ENCODE measurements at regions of chr11 and their contacts with region 1.

Region 1: GRCh38 chr11:57567515-57568329 is at the start of gene UBE2L6:
- DNase-seq: peak in 1 of 2 experiments; percentile 80
- H3K4me3 ChIP-seq: peak within 1 kb of the TSS; percentile 41 to 89 (median 83)
- H3K27ac ChIP-seq: peak within 1 kb of the TSS; percentile 78; the same call in 1 of the 2 replicates
- H3K4me1 ChIP-seq: peaks cover 0 to 11% (median 4%) of the 10 kb centered on the region in 4 experiments; a peak in 6 of 7 replicates
- H3K27me3 ChIP-seq: no peaks in the 10 kb centered on the region
- CTCF ChIP-seq: peak in 2 of 3 experiments; percentile 48 to 50; a peak in 3 of 4 replicates
- EP300 ChIP-seq: no peak
- POLR2A ChIP-seq: peak; percentile 65 to 81
- RAD21 ChIP-seq: peak in 1 of 2 experiments; percentile 26; a peak in 2 of 4 replicates
- total RNA-seq, gene UBE2L6: 67.8 and 68.1 TPM in 2 replicates

Region 2: DNA sequence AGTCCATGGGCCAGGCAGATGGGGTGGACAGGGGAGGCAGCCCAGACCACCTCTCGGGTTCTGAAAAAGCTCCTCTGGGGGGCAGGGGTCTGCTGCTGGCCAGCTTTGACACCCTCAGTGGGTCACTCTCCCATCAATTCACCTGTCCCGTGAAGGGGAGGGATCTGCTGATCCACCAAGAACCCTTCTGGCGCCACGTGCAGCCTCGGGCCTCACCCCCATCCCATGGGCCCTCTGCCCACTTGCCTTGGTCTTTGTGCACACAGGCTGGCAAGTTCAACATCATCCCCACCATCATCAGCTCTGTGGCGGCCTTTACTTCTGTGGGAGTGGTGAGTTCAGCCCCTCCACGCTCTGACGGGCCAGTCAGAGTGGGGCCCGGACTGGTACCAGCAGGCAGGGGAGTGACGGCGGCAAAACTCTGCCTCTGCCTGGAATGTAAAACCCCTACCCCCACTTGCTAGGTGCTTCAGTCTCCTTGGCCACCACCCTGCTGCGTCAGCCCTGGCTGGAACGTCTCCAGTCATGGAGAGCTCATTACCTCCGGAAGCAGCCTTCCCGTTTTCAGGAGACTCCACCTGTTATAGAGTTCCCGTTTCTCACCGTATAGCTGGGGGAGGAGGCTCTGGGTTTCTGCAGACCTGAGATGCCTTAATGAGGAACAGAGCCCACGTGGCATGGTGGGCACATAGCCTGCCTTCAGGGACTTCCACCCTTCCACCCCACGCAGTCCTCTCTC is 199.4 kb before region 1 on chr11:
- CTCF ChIA-PET with region 1: no interaction called
- POLR2A ChIA-PET with region 1: no interaction called
- DNase-seq: no peak
- H3K4me3 ChIP-seq: no peak overlapping the region
- H3K27ac ChIP-seq: no peak overlapping the region
- H3K4me1 ChIP-seq: peaks cover 8 to 17% (median 11%) of the 10 kb centered on the region in 4 experiments
- H3K27me3 ChIP-seq: no peaks in the 10 kb centered on the region; a peak in 2 of 7 replicates
- CTCF ChIP-seq: no peak
- EP300 ChIP-seq: no peak
- POLR2A ChIP-seq: no peak
- RAD21 ChIP-seq: no peak

Region 3: GRCh38 chr11:57556061-57556460 is 11.7 kb before region 1 on chr11:
- CTCF ChIA-PET with region 1: interaction called, 18 read pairs
- POLR2A ChIA-PET with region 1: interaction called, 7 read pairs
- DNase-seq: no peak
- H3K4me3 ChIP-seq: no peak overlapping the region
- H3K27ac ChIP-seq: no peak overlapping the region
- H3K4me1 ChIP-seq: peaks cover 0 to 3% (median 2%) of the 10 kb centered on the region in 4 experiments; a peak in 2 of 7 replicates
- H3K27me3 ChIP-seq: no peaks in the 10 kb centered on the region
- CTCF ChIP-seq: no peak
- EP300 ChIP-seq: no peak
- POLR2A ChIP-seq: no peak
- RAD21 ChIP-seq: no peak

Region 4: DNA sequence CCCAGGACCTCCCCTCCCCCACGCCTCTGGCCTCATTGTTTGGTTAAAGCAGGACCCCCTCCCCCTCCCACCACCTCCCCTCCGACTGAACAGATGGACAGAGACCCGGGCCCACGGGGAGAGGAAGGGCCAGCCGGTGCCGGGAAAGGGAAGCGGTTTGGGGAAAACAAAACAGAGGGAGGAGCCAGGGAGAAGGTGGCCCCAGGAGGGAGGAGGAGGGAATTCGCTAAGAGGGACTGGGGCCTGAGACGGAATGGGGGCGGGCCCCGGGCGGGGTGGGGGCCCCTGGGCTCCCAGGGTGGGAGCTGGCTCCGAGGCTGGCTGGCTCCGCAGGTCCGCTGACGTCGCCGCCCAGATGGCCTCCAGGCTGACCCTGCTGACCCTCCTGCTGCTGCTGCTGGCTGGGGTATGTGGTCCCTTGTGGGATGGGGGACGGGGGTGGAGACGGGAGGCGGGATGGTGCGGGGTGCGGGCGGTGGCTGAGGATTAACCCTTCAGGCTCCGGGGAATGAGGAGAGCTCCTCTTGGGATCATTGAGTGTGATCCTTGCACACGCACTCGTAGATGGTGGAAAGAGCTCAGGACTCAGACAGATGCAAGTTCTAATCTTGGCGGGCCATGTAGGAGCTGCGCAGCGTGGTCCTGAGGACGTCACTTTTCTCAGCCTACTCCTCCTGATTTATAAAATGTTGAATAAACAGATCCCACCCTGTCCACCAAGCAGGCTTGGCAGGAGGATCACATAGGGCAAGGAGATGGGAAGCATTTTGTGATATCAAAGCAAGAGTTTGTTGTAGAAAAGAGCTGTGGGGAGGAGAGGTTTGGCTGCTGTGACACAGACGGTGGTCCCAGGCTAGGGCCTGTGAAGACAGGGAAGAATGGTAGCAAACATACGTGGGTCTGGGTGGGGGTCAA is 30.5 kb after region 1 on chr11:
- CTCF ChIA-PET with region 1: interaction called, 39 read pairs
- POLR2A ChIA-PET with region 1: interaction called, 66 read pairs
- DNase-seq: peak; percentile 75 to 87
- H3K4me3 ChIP-seq: peak overlapping the region; percentile 41 to 64 (median 54)
- H3K27ac ChIP-seq: peak overlapping the region; percentile 68; the same call in 1 of the 2 replicates
- H3K4me1 ChIP-seq: peaks cover 7 to 17% (median 11%) of the 10 kb centered on the region in 4 experiments
- H3K27me3 ChIP-seq: no peaks in the 10 kb centered on the region
- CTCF ChIP-seq: no peak
- EP300 ChIP-seq: peak in 1 of 2 experiments; percentile 86; a peak in 1 of 3 replicates
- POLR2A ChIP-seq: no peak; a peak in 1 of 3 replicates
- RAD21 ChIP-seq: peak in 1 of 2 experiments; percentile 12; a peak in 1 of 4 replicates

Region 5: GRCh38 chr11:57604296-57605027 is 36.7 kb after region 1 on chr11:
- CTCF ChIA-PET with region 1: interaction called, 39 read pairs
- POLR2A ChIA-PET with region 1: interaction called, 66 read pairs
- DNase-seq: no peak
- H3K4me3 ChIP-seq: no peak overlapping the region
- H3K27ac ChIP-seq: no peak overlapping the region
- H3K4me1 ChIP-seq: no peaks in the 10 kb centered on the region
- H3K27me3 ChIP-seq: no peaks in the 10 kb centered on the region
- CTCF ChIP-seq: no peak
- EP300 ChIP-seq: no peak
- POLR2A ChIP-seq: no peak
- RAD21 ChIP-seq: no peak

Region 6: DNA sequence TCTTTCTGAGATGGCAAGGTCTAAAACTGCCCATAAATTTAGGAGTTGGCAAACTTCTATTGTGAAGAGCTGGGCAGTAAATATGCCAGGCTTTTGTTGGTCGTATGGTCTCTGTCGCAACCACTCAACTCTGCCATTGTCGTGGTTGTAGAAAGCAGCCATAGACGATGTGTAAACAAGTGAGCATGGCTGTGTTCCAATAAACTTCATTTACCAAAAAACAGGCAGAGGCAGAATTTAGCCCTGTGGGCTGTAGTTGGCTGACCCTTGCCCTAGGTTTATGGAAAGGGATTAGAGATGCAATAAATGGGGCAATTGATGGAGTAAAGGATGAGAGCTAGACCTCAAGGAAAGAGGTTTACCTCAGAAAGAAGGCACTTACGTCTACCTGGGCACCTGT is 64.4 kb after region 1 on chr11:
- CTCF ChIA-PET with region 1: interaction called, 357 read pairs
- POLR2A ChIA-PET with region 1: interaction called, 591 read pairs
- DNase-seq: no peak
- H3K4me3 ChIP-seq: no peak overlapping the region
- H3K27ac ChIP-seq: no peak overlapping the region
- H3K4me1 ChIP-seq: peaks cover under 1 to 4% (median under 1%) of the 10 kb centered on the region in 4 experiments
- H3K27me3 ChIP-seq: no peaks in the 10 kb centered on the region; a peak in 1 of 7 replicates
- CTCF ChIP-seq: no peak
- EP300 ChIP-seq: no peak
- POLR2A ChIP-seq: no peak
- RAD21 ChIP-seq: no peak

Region 7: DNA sequence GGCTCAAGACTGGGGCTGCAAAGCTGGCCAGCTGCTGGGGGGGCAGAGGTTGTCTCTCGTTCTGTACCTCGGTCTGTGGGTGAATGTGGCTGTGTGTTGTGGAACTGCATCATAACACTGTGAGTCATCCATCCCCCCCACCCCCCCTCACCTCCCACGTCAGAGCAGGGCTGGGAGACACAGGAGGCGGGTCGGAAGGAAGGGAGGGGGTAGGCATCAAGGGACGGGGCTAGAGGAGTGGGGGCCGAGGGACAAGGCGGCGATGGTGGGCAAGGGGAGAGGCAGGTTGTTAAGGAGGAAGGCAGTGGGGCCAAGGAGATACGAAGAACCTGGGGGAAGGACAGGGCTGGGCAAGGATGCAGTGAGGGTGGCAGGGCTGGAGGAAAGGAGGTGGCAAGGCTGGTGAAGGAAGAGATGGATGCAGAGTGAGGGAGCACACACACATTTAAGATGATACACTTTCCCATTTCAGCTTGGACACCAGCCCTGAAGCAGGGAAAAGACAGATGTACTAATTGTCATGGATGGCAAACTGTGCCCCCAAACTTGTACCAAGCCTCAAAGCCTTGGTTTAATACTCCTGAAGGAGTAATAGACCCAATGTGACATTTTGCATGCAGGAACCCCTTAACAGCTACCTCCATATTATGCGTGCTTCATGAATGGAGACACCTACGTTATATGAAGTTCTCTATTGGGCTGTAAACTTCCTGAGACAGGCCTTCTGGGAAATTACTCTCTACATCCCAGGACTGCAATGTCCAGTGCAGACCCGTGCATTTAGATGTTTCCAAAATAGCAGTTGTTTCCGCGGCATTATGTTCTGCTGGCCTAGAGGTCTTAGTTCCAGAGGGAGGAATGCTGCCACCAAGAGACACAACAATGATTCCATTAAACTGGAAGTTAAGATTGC is 82.4 kb after region 1 on chr11 and contains the start of gene YPEL4:
- CTCF ChIA-PET with region 1: interaction called, 357 read pairs
- POLR2A ChIA-PET with region 1: interaction called, 591 read pairs
- DNase-seq: peak in 1 of 2 experiments; percentile 60
- H3K4me3 ChIP-seq: peak within 1 kb of the TSS; percentile 27 to 65 (median 50); a peak in 7 of 8 replicates
- H3K27ac ChIP-seq: no peak within 1 kb of the TSS
- H3K4me1 ChIP-seq: peaks cover 26 to 47% (median 34%) of the 10 kb centered on the region in 4 experiments
- H3K27me3 ChIP-seq: peaks cover 0 to 4% (median 1%) of the 10 kb centered on the region in 4 experiments; a peak in 5 of 7 replicates
- CTCF ChIP-seq: no peak
- EP300 ChIP-seq: no peak
- POLR2A ChIP-seq: peak; percentile 36 to 75
- RAD21 ChIP-seq: no peak
- total RNA-seq, gene YPEL4: 0.13 TPM in 1 of 2 replicates, not detected in the other

Region 8: DNA sequence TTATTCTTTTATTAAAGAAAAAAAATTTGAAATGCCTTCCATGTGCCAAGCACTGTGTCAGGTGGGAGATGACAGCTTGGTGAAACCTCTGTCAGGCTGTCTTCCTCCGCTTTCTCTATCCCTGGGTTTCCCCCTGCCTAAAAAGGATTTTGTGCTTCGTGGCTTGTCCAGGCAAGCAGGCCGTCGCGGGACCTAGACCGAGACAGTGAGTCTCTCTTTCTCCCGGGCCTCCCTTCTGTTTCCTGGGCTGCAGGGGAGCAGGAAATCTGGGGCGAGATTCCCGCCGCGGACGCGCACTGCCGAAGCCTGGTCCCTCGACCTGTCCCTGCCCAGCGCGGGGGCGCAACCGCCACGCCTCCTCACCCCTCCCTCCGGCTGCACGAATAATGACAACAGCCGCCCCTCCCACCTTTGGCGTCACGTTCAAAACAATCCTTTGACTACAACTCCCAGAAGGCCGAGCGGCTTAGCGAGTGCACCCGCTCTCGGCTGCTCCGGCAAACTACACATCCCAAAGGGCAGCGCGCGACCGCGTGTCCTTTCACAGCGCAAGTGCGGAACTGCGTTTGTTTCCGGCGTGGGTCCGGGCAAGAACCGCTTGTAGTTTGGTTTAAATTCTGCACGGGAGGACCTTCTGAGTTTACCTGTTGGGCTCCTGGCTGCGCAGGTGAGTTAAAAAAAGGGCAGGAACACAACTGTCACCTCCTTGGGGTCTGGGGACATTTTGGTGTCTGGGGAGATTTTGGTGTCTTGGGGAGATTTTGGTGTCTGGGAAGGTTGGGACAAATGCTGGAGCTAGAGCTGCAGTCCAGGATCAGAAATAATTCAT is 89.7 kb after region 1 on chr11 and contains the start of gene CLP1:
- CTCF ChIA-PET with region 1: interaction called, 15 read pairs
- POLR2A ChIA-PET with region 1: interaction called, 23 read pairs
- DNase-seq: peak; percentile 92 to 97
- H3K4me3 ChIP-seq: peak within 1 kb of the TSS; percentile 86 to 99 (median 92)
- H3K27ac ChIP-seq: no peak within 1 kb of the TSS
- H3K4me1 ChIP-seq: no peaks in the 10 kb centered on the region; a peak in 3 of 7 replicates
- H3K27me3 ChIP-seq: no peaks in the 10 kb centered on the region; a peak in 2 of 7 replicates
- CTCF ChIP-seq: no peak
- EP300 ChIP-seq: no peak
- POLR2A ChIP-seq: peak; percentile 17 to 73
- RAD21 ChIP-seq: 0 out of 4 replicates have a peak, but pooled peaks of 1 of the 2 experiments have one; percentile 3
- total RNA-seq, gene CLP1: 29.3 and 29.9 TPM in 2 replicates

Measured in H1 (cell line).